ENCODE measurements at regions of chr4 and their contacts with region 1.

Region 1: GRCh38 chr4:140579278-140579677 is 10.5 kb upstream of the UCP1 start:
- DNase-seq: no peak
- ATAC-seq: no peak

Region 2: DNA sequence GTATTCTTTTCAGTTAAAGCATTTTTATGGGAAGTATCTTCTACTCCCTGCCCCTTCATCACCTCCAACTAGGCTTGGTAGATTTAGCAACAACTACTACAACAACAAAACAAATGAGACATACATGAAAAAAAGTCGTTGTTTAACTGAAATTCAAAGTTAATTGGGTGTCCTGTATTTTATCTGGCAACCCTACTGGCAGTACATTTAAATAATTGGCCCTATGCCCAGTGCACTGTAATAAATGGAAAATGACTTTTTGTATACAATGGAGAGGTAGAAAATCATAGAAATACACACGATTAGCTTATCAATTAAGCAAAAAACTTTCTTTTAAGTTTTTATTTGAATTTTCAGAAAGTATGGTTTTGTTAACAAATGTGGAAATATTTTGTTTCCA is 130.4 kb before region 1 on chr4:
- intact Hi-C with region 1: no loop called
- DNase-seq: no peak
- ATAC-seq: no peak

Region 3: DNA sequence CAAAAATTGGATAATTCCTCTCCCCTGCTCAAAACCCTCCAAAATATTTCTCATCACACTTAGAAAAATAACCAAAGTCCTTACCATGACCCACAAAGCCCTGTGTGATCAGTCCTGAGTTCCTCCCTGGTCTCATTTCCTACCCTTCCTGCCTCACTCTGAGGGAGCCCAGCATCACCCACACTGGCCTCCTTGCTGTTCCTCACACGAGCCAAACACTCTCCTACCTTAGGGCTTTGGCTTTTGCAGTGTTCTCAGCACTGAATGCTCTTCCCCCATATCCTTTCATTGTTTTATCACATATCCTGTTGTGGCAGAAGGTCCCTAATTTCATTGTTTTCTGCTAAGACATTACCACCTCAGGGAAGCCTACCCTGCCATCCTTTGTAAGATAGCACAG is 93.3 kb before region 1 on chr4:
- intact Hi-C with region 1: no loop called
- DNase-seq: no peak
- ATAC-seq: no peak

Region 4: GRCh38 chr4:140595065-140595464 is 15.8 kb after region 1 on chr4:
- intact Hi-C with region 1: loop called (anchors 1 kb)
- DNase-seq: no peak
- ATAC-seq: no peak

Region 5: DNA sequence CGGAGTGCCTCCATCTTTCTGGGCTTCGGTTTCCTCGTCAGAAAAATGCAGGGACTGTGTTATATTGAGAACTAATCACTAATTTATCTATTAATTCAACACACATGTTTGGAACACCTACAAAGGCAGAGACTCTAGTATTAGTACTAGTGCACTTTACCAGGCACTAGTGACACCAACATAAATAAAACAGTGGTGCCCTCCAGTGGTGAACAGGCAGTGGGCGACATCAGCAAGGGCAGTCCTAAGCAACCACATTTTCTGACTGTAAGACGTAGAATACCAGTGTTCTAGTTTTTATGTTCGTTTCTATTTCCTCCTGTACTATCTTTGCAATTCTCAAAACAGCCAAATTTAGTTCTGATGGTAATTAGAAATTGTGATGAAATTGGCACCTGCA is 58.6 kb after region 1 on chr4:
- intact Hi-C with region 1: no loop called
- DNase-seq: no peak
- ATAC-seq: no peak

Measured in sciatic nerve (tissue), 2 donors.